ENCODE measurements at regions of chr22 and their contacts with region 1.

Region 1: DNA sequence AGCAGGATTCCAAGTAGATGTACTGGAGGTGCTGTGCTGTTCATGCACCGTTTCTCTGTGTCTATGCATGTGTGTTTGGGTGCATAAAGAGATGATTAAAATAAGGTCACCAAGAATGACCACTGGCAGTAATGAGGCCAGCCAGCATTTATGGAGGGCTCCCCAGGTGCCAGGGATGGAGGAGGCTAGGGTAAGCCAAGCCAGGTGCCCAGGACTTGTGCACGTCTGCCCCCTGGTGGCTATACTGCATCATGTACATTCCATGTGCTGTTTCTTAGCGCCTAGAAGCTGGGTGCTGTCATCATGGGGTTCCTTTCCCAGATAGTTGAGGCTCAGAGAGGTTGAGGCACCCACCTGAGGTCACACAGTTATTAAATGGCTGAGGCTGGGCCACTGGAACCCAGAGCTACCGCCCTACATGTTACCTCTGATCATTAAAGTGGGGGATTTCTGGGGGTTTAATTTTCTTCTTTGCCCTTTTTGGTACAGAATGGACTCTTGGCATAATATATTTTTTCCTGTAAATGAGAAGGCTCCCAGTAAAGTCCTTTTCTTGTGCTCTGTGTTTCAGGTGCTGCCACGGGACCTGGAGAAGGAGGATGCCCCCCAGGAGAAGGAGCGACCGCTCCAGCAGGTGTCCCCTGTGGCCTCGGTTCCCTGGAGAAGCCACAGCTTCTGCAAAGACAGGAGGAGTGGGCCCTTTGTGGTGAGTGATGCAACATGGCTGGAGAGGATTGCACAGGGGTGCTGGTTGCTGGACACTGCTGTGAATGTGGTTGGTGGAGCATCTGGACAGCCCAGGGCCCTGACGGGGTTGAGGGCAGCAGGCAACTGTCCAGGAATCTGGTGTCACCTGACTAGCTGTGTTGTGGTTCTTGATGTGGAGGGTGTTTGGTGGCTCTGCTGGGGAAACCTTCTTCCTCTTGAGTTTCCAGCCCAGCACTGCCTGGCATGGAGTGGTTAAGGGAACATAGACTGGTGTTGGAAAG is 96.4 kb downstream of the KIAA1671 start:
- DNase-seq: peak; percentile 79
- H3K4me3 ChIP-seq: no peak overlapping the region
- H3K27ac ChIP-seq: no peak overlapping the region
- H3K4me1 ChIP-seq: peaks cover 15% of the 10 kb centered on the region
- H3K27me3 ChIP-seq: no peaks in the 10 kb centered on the region
- CTCF ChIP-seq: peak; percentile 92

Region 2: GRCh38 chr22:24768537-24769374 is 280.2 kb before region 1 on chr22:
- intact Hi-C with region 1: loop called (anchors 10 kb)
- DNase-seq: peak; percentile 76
- H3K4me3 ChIP-seq: no peak overlapping the region
- H3K27ac ChIP-seq: no peak overlapping the region
- H3K4me1 ChIP-seq: no peaks in the 10 kb centered on the region
- H3K27me3 ChIP-seq: no peaks in the 10 kb centered on the region
- CTCF ChIP-seq: peak; percentile 48

Region 3: GRCh38 chr22:24938741-24939341 is 110.1 kb before region 1 on chr22:
- intact Hi-C with region 1: loop called (anchors 5 kb)
- DNase-seq: peak; percentile 48
- H3K4me3 ChIP-seq: no peak overlapping the region
- H3K27ac ChIP-seq: no peak overlapping the region
- H3K4me1 ChIP-seq: no peaks in the 10 kb centered on the region
- H3K27me3 ChIP-seq: no peaks in the 10 kb centered on the region
- CTCF ChIP-seq: peak; percentile 74

Region 4: GRCh38 chr22:24951942-24952836 is 96.8 kb before region 1 on chr22 and contains the start of gene KIAA1671:
- intact Hi-C with region 1: loop called (anchors 2 kb)
- DNase-seq: peak; percentile 91
- H3K4me3 ChIP-seq: peak within 1 kb of the TSS; percentile 67
- H3K27ac ChIP-seq: peak within 1 kb of the TSS; percentile 89
- H3K4me1 ChIP-seq: no peaks in the 10 kb centered on the region
- H3K27me3 ChIP-seq: peaks cover 4% of the 10 kb centered on the region
- CTCF ChIP-seq: peak; percentile 99
- total RNA-seq, gene KIAA1671: 82.5 to 94.3 TPM

Region 5: DNA sequence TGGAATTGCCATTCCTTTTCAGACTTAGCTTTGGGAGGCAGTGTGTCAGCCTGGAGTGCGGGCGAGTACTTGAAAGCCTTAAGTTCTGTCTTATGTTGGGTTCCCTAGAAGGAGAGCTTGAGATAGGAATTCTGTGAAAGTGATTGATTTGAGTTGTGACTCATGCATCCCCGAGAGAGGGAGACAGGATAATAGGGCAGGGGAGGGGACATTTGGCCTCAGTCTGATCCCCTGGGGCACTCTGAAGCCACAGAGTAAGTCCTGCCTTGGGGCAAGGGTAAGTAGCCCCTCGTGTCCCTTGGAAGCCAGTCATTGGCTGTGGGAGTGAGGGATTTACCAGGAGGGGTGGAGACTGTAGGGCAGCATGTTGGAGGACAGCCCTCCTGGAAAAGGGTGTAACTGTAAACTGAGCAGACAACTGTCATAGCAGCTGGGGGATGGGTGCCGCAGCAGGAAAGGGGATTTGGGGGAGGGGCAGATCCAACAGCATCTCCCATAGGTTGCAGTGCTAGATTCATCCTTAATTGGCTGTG is 52.5 kb before region 1 on chr22:
- intact Hi-C with region 1: loop called (anchors 5 kb)
- DNase-seq: peak; percentile 68
- H3K4me3 ChIP-seq: no peak overlapping the region
- H3K27ac ChIP-seq: peak overlapping the region; percentile 27
- H3K4me1 ChIP-seq: peaks cover 12% of the 10 kb centered on the region
- H3K27me3 ChIP-seq: no peaks in the 10 kb centered on the region
- CTCF ChIP-seq: no peak

Measured in colonic mucosa (tissue), 4 donors.